Ovary (tissue), 10 donors: ENCODE measurements at regions of chr9 and their contacts with region 1.

Region 1: GRCh38 chr9:108994695-108995094 is 18.6 kb downstream of the CTNNAL1 start:
- DNase-seq: peak; percentile 31 to 52 (median 50)
- H3K4me3 ChIP-seq: no peak overlapping the region
- H3K27ac ChIP-seq: peak overlapping the region in 1 of 2 donors; percentile 21
- H3K4me1 ChIP-seq: peaks cover 17% of the 10 kb centered on the region
- H3K27me3 ChIP-seq: no peaks in the 10 kb centered on the region
- CTCF ChIP-seq: no peak
- EP300 ChIP-seq: no peak
- POLR2A ChIP-seq: no peak

Region 2: GRCh38 chr9:109579191-109579948 is 584.7 kb after region 1 on chr9:
- intact Hi-C with region 1: loop called in 1 of 4 experiments (anchors 5 kb)
- DNase-seq: no peak
- H3K4me3 ChIP-seq: no peak overlapping the region
- H3K27ac ChIP-seq: no peak overlapping the region
- H3K4me1 ChIP-seq: no peaks in the 10 kb centered on the region
- H3K27me3 ChIP-seq: no peaks in the 10 kb centered on the region
- CTCF ChIP-seq: no peak
- EP300 ChIP-seq: no peak
- POLR2A ChIP-seq: no peak